AG04449 (cell line): ENCODE measurements at regions of chrX and their contacts with region 1.

Region 1: GRCh38 chrX:19334945-19335626 is 8.6 kb upstream of the PDHA1 start:
- DNase-seq: no peak
- H3K4me3 ChIP-seq: no peak overlapping the region
- CTCF ChIP-seq: no peak

Region 2: GRCh38 chrX:18377796-18378195 is 957.3 kb before region 1 on chrX:
- CTCF ChIA-PET with region 1: interaction called, 13 read pairs
- POLR2A ChIA-PET with region 1: no interaction called
- DNase-seq: no peak
- H3K4me3 ChIP-seq: no peak overlapping the region
- CTCF ChIP-seq: peak; percentile 50

Region 3: DNA sequence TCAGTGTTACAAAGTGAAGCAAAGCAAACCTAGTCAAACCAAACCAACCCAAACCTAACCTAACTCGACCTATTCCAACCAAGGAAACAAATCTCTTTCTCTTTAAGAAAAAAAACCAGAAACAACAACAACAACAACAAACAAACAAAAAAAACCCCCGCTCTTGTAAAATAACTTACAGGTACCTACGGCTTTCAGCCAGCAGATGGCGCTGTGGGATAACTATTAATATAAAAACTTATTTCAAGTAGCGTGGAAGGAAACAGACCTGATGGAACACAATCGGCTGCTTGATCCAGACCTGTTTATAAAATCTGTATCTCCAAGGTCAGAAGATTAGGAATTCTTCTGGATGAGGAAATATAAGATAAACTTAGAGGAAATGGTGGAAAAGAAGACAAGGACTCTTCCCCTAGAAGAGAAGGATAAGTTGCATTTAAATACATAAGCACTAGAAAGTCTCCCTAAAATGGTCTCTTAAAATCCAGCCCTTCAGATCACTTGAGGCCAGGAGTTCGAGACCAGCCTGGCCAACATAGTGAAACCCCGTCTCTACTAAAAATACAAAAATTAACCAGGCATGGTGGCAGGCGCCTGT is 944.0 kb before region 1 on chrX:
- CTCF ChIA-PET with region 1: interaction called, 32 read pairs
- POLR2A ChIA-PET with region 1: no interaction called
- DNase-seq: no peak
- H3K4me3 ChIP-seq: no peak overlapping the region
- CTCF ChIP-seq: peak; percentile 9

Region 4: GRCh38 chrX:18931972-18932371 is 403.1 kb before region 1 on chrX:
- CTCF ChIA-PET with region 1: interaction called, 28 read pairs
- POLR2A ChIA-PET with region 1: no interaction called
- DNase-seq: no peak
- H3K4me3 ChIP-seq: no peak overlapping the region
- CTCF ChIP-seq: no peak

Region 5: DNA sequence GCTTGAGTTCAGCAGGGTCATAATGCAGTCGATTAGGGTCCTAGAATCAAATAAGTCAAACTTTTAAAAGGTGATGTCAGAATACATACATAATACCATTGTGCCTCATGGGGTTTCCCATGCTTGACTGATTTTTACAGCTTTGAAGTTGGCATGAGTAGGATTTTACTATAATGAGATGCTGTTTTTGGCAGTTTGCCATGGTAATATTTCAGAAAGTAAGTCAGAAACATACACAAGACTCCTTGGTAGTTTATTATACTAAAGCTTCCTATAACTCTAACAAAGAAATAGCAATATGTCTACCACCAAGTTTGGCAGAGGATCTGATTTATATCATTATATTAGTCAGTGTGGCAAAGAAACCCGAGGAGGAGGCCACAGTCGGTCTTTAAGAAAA is 396.4 kb before region 1 on chrX:
- CTCF ChIA-PET with region 1: interaction called, 28 read pairs
- POLR2A ChIA-PET with region 1: no interaction called
- DNase-seq: no peak
- H3K4me3 ChIP-seq: no peak overlapping the region
- CTCF ChIP-seq: no peak

Region 6: GRCh38 chrX:19017271-19017670 is 317.8 kb before region 1 on chrX:
- CTCF ChIA-PET with region 1: interaction called, 16 read pairs
- POLR2A ChIA-PET with region 1: no interaction called
- DNase-seq: no peak
- H3K4me3 ChIP-seq: no peak overlapping the region
- CTCF ChIP-seq: peak; percentile 38